ENCODE measurements at regions of chrX and their contacts with region 1.

Region 1: DNA sequence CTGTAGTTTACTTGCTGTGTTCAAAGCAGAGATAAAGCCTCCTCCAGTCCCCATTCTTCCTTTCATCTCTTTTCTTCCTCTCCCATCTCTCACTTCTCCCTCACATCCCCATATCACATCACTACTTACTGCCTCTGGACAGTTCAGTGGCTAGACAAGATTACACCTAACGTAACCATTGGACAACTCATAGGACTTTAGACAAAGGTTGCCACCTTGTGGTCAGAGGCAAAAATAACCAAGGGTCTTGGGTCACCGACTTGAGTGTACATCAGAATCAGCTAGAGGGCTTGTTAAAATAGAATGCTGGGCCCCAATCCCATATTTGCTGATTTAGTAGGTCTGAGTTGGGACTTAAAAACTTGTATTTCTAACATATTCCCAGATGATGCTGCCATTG is 109.3 kb upstream of the DGKK start:
- DNase-seq: no peak
- H3K4me3 ChIP-seq: no peak overlapping the region
- H3K27ac ChIP-seq: no peak overlapping the region
- H3K4me1 ChIP-seq: no peaks in the 10 kb centered on the region
- H3K27me3 ChIP-seq: peaks cover 0 to 5% (median 0%) of the 10 kb centered on the region in 7 donors
- CTCF ChIP-seq: peak in 10 of 11 experiments; percentile 25 to 56 (median 49)
- POLR2A ChIP-seq: no peak

Region 2: GRCh38 chrX:49915361-49916222 is 664.4 kb before region 1 on chrX:
- intact Hi-C with region 1: loop called (anchors 10 kb)
- DNase-seq: no peak
- H3K4me3 ChIP-seq: no peak overlapping the region
- H3K27ac ChIP-seq: no peak overlapping the region
- H3K4me1 ChIP-seq: no peaks in the 10 kb centered on the region
- H3K27me3 ChIP-seq: peaks cover 0 to 9% (median 0%) of the 10 kb centered on the region in 7 donors
- CTCF ChIP-seq: peak; percentile 10 to 88 (median 78)
- POLR2A ChIP-seq: no peak

Region 3: GRCh38 chrX:50100188-50100587 is 479.8 kb before region 1 on chrX:
- intact Hi-C with region 1: loop called (anchors 10 kb)
- DNase-seq: no peak
- H3K4me3 ChIP-seq: no peak overlapping the region
- H3K27ac ChIP-seq: no peak overlapping the region
- H3K4me1 ChIP-seq: no peaks in the 10 kb centered on the region
- H3K27me3 ChIP-seq: no peaks in the 10 kb centered on the region
- CTCF ChIP-seq: peak in 7 of 11 experiments; percentile 5 to 50 (median 40)
- POLR2A ChIP-seq: no peak

Measured in spleen (tissue), 13 donors.